Heart left ventricle (tissue), 16 donors: ENCODE measurements at regions of chr16 and their contacts with region 1.

Region 1: DNA sequence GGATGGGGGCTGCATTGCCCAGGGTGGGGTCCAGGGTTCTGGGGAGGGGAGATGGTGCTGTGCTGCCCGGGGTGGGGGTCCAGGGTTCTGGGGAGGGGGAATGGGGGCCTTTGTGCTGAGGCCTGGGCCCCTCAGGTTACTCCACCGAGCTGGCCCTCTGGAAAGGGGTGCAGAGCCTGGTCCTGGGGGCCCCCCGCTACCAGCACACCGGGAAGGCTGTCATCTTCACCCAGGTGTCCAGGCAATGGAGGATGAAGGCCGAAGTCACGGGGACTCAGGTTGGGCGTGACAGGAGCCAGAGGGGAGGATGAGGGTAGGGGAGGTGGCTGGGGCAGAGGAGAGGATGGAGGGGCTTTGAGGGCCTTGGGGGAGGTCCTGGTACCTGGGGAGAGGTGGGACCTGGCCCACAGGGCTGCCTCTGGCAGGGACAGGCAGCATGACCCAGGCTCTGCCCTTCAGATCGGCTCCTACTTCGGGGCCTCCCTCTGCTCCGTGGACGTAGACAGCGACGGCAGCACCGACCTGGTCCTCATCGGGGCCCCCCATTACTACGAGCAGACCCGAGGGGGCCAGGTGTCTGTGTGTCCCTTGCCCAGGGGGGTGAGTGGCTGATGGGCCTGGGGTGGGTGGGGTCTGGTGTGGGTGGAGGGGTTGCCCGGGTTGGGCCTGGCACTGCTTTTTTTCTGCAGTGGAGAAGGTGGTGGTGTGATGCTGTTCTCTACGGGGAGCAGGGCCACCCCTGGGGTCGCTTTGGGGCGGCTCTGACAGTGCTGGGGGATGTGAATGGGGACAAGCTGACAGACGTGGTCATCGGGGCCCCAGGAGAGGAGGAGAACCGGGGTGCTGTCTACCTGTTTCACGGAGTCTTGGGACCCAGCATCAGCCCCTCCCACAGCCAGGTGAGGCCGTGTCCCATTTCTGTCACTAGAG is 7.8 kb downstream of the ITGAX start:
- DNase-seq: peak in 1 of 5 donors; percentile 11
- ATAC-seq: no peak
- H3K4me3 ChIP-seq: no peak overlapping the region
- H3K27ac ChIP-seq: no peak overlapping the region
- H3K4me1 ChIP-seq: peaks cover 0 to 30% (median under 1%) of the 10 kb centered on the region in 12 donors
- H3K27me3 ChIP-seq: peaks cover 0 to 5% (median 0%) of the 10 kb centered on the region in 9 donors
- CTCF ChIP-seq: no peak
- POLR2A ChIP-seq: no peak

Region 2: DNA sequence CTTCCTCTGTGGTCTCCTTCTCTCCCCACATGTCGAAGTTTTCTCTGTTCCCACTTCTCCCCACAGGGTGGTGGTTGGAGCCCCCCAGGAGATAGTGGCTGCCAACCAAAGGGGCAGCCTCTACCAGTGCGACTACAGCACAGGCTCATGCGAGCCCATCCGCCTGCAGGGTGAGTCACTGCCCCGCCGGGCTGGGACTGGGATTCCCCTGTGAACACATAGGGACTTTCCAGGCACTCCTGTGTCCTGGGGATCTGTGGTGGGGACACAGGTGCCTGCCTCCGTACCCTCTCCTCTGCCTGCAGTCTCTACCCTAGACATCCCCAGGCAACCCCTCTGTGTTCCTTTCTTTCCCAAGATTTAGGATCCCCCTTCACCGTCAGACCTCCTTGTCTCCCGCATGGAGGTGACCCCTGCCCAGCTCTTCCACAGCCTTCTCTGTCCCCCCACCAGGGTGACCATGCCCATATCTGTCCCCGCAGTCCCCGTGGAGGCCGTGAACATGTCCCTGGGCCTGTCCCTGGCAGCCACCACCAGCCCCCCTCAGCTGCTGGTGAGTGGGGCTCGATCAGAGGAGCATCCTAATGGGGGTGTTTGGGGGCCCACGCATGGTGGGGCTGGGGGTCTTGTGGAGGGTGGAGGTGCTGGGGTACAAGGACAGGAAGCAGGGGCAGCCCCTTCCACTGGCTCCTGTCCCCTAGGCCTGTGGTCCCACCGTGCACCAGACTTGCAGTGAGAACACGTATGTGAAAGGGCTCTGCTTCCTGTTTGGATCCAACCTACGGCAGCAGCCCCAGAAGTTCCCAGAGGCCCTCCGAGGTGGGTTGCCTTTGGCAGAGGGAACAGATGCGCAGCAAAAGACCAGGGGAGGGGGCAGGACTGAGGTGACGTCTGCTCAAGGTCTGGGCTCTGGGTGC is 97.2 kb before region 1 on chr16:
- intact Hi-C with region 1: loop called in 1 of 10 experiments (anchors 5 kb)
- DNase-seq: no peak
- ATAC-seq: peak in 1 of 4 donors; percentile 48
- H3K4me3 ChIP-seq: no peak overlapping the region
- H3K27ac ChIP-seq: no peak overlapping the region
- H3K4me1 ChIP-seq: peaks cover 0 to 48% (median 0%) of the 10 kb centered on the region in 12 donors
- H3K27me3 ChIP-seq: peaks cover 0 to 17% (median 0%) of the 10 kb centered on the region in 9 donors
- CTCF ChIP-seq: no peak
- POLR2A ChIP-seq: no peak